CD8-positive, alpha-beta memory T cell (primary cell): ENCODE measurements at regions of chr17 and their contacts with region 1.

Region 1: GRCh38 chr17:75250009-75250471 is 11.4 kb downstream of the GGA3 start:
- DNase-seq: peak in 4 of 5 donors; percentile 26 to 71 (median 46)
- H3K4me3 ChIP-seq: peak overlapping the region; percentile 49
- H3K4me3 Mint-ChIP-seq: peak overlapping the region; percentile 35 to 85 (median 70)
- H3K27ac ChIP-seq: peak overlapping the region; percentile 0
- H3K27ac Mint-ChIP-seq: peak overlapping the region; percentile 79 to 98 (median 93)
- H3K4me1 ChIP-seq: peaks cover 13% of the 10 kb centered on the region
- H3K4me1 Mint-ChIP-seq: peaks cover 47 to 56% (median 53%) of the 10 kb centered on the region in 3 donors
- H3K27me3 ChIP-seq: no peaks in the 10 kb centered on the region
- H3K27me3 Mint-ChIP-seq: peaks cover 0 to 1% of the 10 kb centered on the region in 2 donors

Region 2: GRCh38 chr17:75231741-75232464 is 18.1 kb before region 1 on chr17:
- CTCF ChIA-PET with region 1: no interaction called
- POLR2A ChIA-PET with region 1: no interaction called
- DNase-seq: no peak
- H3K4me3 ChIP-seq: no peak overlapping the region
- H3K4me3 Mint-ChIP-seq: no peak overlapping the region
- H3K27ac ChIP-seq: no peak overlapping the region
- H3K27ac Mint-ChIP-seq: peak overlapping the region in 2 of 8 donors; percentile 3 to 36
- H3K4me1 ChIP-seq: no peaks in the 10 kb centered on the region
- H3K4me1 Mint-ChIP-seq: no peaks in the 10 kb centered on the region
- H3K27me3 ChIP-seq: no peaks in the 10 kb centered on the region
- H3K27me3 Mint-ChIP-seq: no peaks in the 10 kb centered on the region

Region 3: DNA sequence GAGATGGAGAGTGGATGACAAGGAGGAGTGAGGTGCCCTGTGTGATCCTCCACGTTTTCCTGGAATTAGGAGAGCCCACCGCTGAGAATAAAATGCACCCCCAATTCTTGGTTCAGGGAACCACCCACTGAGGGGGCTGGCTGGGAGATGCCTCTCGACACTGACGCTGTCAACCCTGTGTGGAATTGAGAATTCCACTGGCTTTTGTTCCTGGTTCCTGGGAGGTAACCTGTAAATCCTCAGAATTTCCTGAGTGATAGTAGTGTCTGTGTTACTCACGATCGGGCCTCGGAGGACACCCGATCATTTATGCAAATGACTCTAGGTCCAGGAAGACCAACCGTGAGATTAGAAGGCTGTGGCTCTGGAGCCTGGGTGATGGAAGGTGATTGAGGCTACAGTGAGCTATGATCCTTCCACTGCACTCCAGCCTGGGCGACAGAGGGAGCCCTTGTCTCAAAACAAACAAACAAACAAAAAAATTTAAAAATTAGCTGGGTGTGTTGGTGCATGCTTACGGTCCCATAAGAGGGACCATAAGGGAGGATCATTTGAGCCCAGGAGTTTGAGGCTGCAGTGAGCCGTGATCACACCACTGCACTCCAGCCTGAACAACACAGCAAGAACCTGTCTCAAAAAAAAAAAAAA is 1115.3 kb after region 1 on chr17:
- CTCF ChIA-PET with region 1: no interaction called
- POLR2A ChIA-PET with region 1: interaction called, 11 read pairs
- DNase-seq: no peak
- H3K4me3 ChIP-seq: no peak overlapping the region
- H3K4me3 Mint-ChIP-seq: no peak overlapping the region
- H3K27ac ChIP-seq: no peak overlapping the region
- H3K27ac Mint-ChIP-seq: no peak overlapping the region
- H3K4me1 ChIP-seq: no peaks in the 10 kb centered on the region
- H3K4me1 Mint-ChIP-seq: no peaks in the 10 kb centered on the region
- H3K27me3 ChIP-seq: no peaks in the 10 kb centered on the region
- H3K27me3 Mint-ChIP-seq: peaks cover 0 to 3% of the 10 kb centered on the region in 2 donors